Activated naive CD4-positive, alpha-beta T cell treated with anti-CD3 and anti-CD28 coated beads, Interleukin-2, amount 10 ng/mL, durations not matched to agents 7 days and 5 days (primary cell): ENCODE measurements at regions of chr3 and their contacts with region 1.

Region 1: GRCh38 chr3:196684548-196685407 is 27.3 kb downstream of the CEP19 start:
- DNase-seq: peak; percentile 77
- H3K4me3 Mint-ChIP-seq: peak overlapping the region; percentile 2
- H3K27ac Mint-ChIP-seq: peak overlapping the region; percentile 6
- H3K4me1 Mint-ChIP-seq: peaks cover 20% of the 10 kb centered on the region
- H3K27me3 Mint-ChIP-seq: peaks cover 4% of the 10 kb centered on the region

Region 2: GRCh38 chr3:196639483-196640296 is 45.1 kb before region 1 on chr3 and contains the start of gene NRROS:
- CTCF ChIA-PET with region 1: interaction called, 17 read pairs
- DNase-seq: peak; percentile 81
- H3K4me3 Mint-ChIP-seq: peak within 1 kb of the TSS; percentile 84
- H3K27ac Mint-ChIP-seq: peak within 1 kb of the TSS; percentile 91
- H3K4me1 Mint-ChIP-seq: peaks cover 77% of the 10 kb centered on the region
- H3K27me3 Mint-ChIP-seq: peaks cover 12% of the 10 kb centered on the region